Naive thymus-derived CD4-positive, alpha-beta T cell (primary cell): ENCODE measurements at regions of chrX and their contacts with region 1.

Region 1: DNA sequence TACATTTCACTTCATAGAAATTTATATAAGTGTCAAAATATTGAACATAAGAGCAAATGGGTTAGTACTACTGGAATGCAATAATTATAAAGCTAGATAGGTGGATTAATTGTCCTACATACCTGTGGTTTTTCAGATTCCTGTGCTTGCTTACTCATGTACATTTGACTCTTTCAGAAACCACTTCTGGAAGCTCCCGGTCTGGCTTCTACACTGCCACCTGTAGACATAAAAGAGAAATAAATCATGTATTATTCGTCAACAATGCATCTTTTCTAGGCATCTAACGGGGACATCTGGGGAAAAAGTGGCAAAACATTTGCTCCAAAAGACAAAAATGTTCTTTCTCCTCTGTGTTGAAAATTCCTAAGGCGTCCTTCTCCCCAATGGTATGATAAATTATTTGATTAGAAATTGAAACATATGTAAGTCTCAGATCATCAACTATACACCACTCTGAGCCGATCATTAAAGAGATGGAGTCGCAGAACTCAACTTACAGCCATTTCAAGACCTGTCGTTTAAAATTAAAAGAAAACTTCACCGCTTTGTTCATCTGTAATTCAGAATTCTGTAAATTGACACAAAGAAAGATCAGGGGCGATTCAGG is 648.7 kb upstream of the DIPK2B start:
- DNase-seq: peak in 6 of 9 donors; percentile 10 to 36 (median 22)
- ATAC-seq: peak; percentile 76
- H3K4me3 ChIP-seq: peak overlapping the region; percentile 77
- H3K4me3 Mint-ChIP-seq: peak overlapping the region; percentile 88 to 95 (median 92)
- H3K27ac ChIP-seq: no peak overlapping the region
- H3K27ac Mint-ChIP-seq: peak overlapping the region in 7 of 9 donors; percentile 16 to 91 (median 69)
- H3K4me1 ChIP-seq: no peaks in the 10 kb centered on the region
- H3K4me1 Mint-ChIP-seq: peaks cover 0 to 45% (median 9%) of the 10 kb centered on the region in 7 donors
- H3K27me3 ChIP-seq: no peaks in the 10 kb centered on the region
- H3K27me3 Mint-ChIP-seq: no peaks in the 10 kb centered on the region

Region 2: GRCh38 chrX:45515262-45516215 is 333.8 kb before region 1 on chrX:
- CTCF ChIA-PET with region 1: no interaction called
- POLR2A ChIA-PET with region 1: no interaction called
- intact Hi-C with region 1: loop called (anchors 1 to 2 kb)
- DNase-seq: peak in 6 of 9 donors; percentile 13 to 35 (median 20)
- ATAC-seq: peak; percentile 68
- H3K4me3 ChIP-seq: no peak overlapping the region
- H3K4me3 Mint-ChIP-seq: no peak overlapping the region
- H3K27ac ChIP-seq: no peak overlapping the region
- H3K27ac Mint-ChIP-seq: no peak overlapping the region
- H3K4me1 ChIP-seq: no peaks in the 10 kb centered on the region
- H3K4me1 Mint-ChIP-seq: peaks cover 0 to 11% (median 0%) of the 10 kb centered on the region in 7 donors
- H3K27me3 ChIP-seq: no peaks in the 10 kb centered on the region
- H3K27me3 Mint-ChIP-seq: peaks cover 0 to 5% (median 0%) of the 10 kb centered on the region in 5 donors

Region 3: GRCh38 chrX:45769761-45770582 is 79.4 kb before region 1 on chrX:
- CTCF ChIA-PET with region 1: no interaction called
- POLR2A ChIA-PET with region 1: interaction called, 3 read pairs
- intact Hi-C with region 1: loop called in 1 of 2 experiments (anchors 10 kb)
- DNase-seq: peak in 3 of 9 donors; percentile 13 to 64 (median 21)
- ATAC-seq: peak; percentile 79
- H3K4me3 ChIP-seq: peak overlapping the region; percentile 71
- H3K4me3 Mint-ChIP-seq: peak overlapping the region; percentile 76 to 95 (median 90)
- H3K27ac ChIP-seq: peak overlapping the region; percentile 76
- H3K27ac Mint-ChIP-seq: peak overlapping the region; percentile 90 to 97 (median 94)
- H3K4me1 ChIP-seq: peaks cover 11 to 45% of the 10 kb centered on the region in 2 donors
- H3K4me1 Mint-ChIP-seq: peaks cover 16 to 68% (median 55%) of the 10 kb centered on the region in 7 donors
- H3K27me3 ChIP-seq: no peaks in the 10 kb centered on the region
- H3K27me3 Mint-ChIP-seq: no peaks in the 10 kb centered on the region

Region 4: GRCh38 chrX:45806410-45807121 is 42.8 kb before region 1 on chrX:
- CTCF ChIA-PET with region 1: interaction called, 4 read pairs
- POLR2A ChIA-PET with region 1: interaction called, 24 read pairs
- intact Hi-C with region 1: loop called (anchors 1 kb)
- DNase-seq: peak in 7 of 9 donors; percentile 59 to 81 (median 77)
- ATAC-seq: peak; percentile 90
- H3K4me3 ChIP-seq: peak overlapping the region; percentile 58
- H3K4me3 Mint-ChIP-seq: peak overlapping the region; percentile 69 to 90 (median 84)
- H3K27ac ChIP-seq: peak overlapping the region; percentile 79
- H3K27ac Mint-ChIP-seq: peak overlapping the region; percentile 93 to 98 (median 97)
- H3K4me1 ChIP-seq: peaks cover 16 to 20% of the 10 kb centered on the region in 2 donors
- H3K4me1 Mint-ChIP-seq: peaks cover 10 to 79% (median 39%) of the 10 kb centered on the region in 7 donors
- H3K27me3 ChIP-seq: no peaks in the 10 kb centered on the region
- H3K27me3 Mint-ChIP-seq: no peaks in the 10 kb centered on the region

Region 5: DNA sequence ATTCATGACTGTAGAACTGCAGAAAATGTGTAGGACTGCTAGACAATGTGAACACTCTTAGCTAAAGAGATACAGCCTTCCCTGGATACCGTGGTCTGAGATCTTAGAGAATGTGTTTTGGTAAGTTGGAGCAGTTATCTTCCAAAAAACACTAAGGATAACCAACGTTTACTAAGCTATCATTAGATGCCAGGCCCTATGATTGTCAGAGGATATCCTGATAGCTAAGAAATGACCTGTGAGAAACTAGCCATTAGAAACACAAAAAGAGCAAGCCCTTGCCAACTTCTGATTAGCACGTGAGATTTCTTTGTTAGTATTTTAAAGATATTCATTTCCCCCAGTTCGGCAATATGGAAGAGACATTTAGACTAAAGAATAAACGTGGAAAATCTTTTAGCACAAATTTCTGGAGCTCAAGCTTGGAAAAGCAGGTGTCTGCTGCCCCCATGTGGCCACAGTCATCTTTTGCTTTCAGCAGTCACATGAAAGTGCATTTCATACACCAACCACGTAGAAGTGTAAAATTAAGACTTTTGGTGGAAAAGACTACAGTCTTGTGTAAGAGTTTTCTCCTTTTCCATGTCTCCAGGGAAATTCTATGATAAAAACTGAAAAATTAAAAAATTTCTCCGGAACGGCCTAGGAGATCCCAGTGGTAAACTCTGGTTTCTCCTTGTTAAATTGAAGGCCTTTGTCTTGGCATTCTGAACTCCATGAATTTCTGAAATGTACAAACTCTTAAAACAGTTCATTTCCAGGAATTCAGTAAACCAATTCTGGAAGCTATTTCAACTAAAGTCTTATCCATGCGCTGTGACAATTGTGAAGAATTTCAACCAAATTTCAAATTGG is 559.4 kb after region 1 on chrX:
- CTCF ChIA-PET with region 1: no interaction called
- POLR2A ChIA-PET with region 1: no interaction called
- intact Hi-C with region 1: loop called in 1 of 2 experiments (anchors 10 kb)
- DNase-seq: peak; percentile 12 to 61 (median 38)
- ATAC-seq: peak; percentile 54
- H3K4me3 ChIP-seq: no peak overlapping the region
- H3K4me3 Mint-ChIP-seq: no peak overlapping the region
- H3K27ac ChIP-seq: no peak overlapping the region
- H3K27ac Mint-ChIP-seq: peak overlapping the region in 1 of 9 donors; percentile 59
- H3K4me1 ChIP-seq: no peaks in the 10 kb centered on the region
- H3K4me1 Mint-ChIP-seq: peaks cover 0 to 2% (median 0%) of the 10 kb centered on the region in 7 donors
- H3K27me3 ChIP-seq: no peaks in the 10 kb centered on the region
- H3K27me3 Mint-ChIP-seq: peaks cover 0 to 5% (median 0%) of the 10 kb centered on the region in 5 donors

Region 6: DNA sequence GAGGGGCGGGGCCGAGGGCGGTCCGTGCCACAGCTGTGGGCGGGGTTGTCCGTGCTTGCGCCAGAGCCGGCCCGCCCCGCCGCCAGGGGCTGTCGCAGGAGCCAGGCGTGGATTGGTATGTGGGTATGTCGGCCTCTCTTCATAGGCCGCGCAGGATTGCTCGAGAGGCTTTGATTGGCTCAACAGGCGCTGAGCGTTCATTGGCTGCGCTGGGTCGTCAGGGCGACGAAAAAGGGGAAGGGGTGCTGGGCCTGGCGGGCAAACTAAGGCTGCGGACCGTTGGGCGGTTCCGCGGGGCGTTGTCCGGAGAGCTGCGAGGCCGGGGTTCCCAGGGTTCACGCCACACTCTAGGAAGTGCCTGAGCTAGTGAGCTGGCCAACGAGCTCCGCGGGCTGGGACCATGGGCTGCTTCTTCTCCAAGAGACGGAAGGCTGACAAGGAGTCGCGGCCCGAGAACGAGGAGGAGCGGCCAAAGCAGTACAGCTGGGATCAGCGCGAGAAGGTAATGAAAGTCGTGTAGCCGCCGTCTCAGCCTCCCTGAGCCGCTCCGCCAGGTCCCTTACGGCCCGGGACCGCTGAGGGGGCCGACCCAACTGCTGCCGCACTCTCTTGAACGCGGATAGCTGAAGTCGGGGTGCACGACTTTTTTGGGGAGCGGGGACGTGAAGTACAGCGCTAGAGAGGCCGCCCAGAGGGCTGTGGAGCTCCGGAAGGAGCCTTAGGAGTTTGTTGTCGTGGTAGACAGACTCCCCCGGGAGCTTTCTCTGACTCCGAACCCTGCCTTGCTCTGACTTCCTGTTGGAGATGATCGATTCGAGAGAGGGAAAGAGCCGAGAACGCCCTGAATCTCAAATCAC is 987.6 kb after region 1 on chrX and contains the start of gene RP2:
- CTCF ChIA-PET with region 1: no interaction called
- POLR2A ChIA-PET with region 1: no interaction called
- intact Hi-C with region 1: loop called in 1 of 2 experiments (anchors 5 kb)
- DNase-seq: peak; percentile 65 to 84 (median 81)
- ATAC-seq: peak; percentile 98
- H3K4me3 ChIP-seq: peak within 1 kb of the TSS; percentile 91
- H3K4me3 Mint-ChIP-seq: peak within 1 kb of the TSS; percentile 93 to 99 (median 97)
- H3K27ac ChIP-seq: peak within 1 kb of the TSS; percentile 83
- H3K27ac Mint-ChIP-seq: peak within 1 kb of the TSS; percentile 80 to 98 (median 93)
- H3K4me1 ChIP-seq: no peaks in the 10 kb centered on the region
- H3K4me1 Mint-ChIP-seq: peaks cover 0 to 29% (median 12%) of the 10 kb centered on the region in 7 donors
- H3K27me3 ChIP-seq: no peaks in the 10 kb centered on the region
- H3K27me3 Mint-ChIP-seq: peaks cover 0 to 3% (median 0%) of the 10 kb centered on the region in 5 donors
- total RNA-seq, gene RP2: 4.9 to 14.5 (median 6.3) TPM